ENCODE measurements at regions of chr10 and their contacts with region 1.

Region 1: DNA sequence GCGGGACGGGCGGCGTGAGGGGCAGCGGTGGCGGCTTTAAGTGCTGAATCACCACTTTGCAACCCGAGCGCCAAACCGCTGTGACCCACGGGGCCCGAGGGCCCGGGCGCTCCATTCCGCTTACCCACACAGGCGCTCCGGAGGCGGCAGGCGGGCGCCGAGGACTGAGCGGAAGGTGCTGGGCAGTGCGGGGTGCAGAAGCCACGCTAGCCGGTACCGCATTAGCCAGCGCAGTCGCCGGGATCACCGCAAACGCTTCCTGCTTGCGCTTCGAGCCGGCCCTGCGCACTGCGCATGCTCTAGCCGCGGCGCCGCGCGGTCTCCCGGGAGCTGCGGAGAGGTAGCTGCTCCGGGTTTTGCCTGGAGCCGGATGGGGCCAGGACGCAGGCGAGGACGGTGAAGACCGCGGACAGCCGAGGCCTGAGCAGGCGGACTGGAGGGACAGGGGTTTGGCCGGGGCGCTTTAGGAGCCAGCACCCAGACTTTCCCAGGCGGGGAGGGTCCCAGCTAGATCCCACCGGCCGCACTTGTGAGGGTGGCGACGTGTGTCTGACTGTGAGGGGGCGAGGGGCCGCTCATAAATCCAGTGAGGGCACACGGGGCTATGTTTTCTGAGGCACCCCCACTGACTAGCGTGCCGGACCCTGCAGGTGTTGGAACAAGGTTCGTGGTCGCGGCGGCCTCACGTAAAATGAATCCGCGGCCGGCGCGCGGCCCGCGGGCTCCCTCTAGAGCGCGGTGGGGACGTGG is at the start of gene IDE:
- DNase-seq: peak; percentile 90
- ATAC-seq: peak; percentile 85
- H3K4me3 Mint-ChIP-seq: peak within 1 kb of the TSS; percentile 77
- H3K27ac Mint-ChIP-seq: peak within 1 kb of the TSS; percentile 88
- H3K4me1 Mint-ChIP-seq: peaks cover 38% of the 10 kb centered on the region
- H3K27me3 Mint-ChIP-seq: no peaks in the 10 kb centered on the region
- total RNA-seq, gene IDE: 30.8 to 35.5 TPM

Region 2: GRCh38 chr10:92087750-92088395 is 486.1 kb before region 1 on chr10:
- CTCF ChIA-PET with region 1: interaction called, 4 read pairs
- POLR2A ChIA-PET with region 1: no interaction called
- intact Hi-C with region 1: loop called (anchors 5 to 10 kb)
- DNase-seq: peak; percentile 73
- ATAC-seq: peak; percentile 99
- H3K4me3 Mint-ChIP-seq: no peak overlapping the region
- H3K27ac Mint-ChIP-seq: no peak overlapping the region
- H3K4me1 Mint-ChIP-seq: peaks cover 5% of the 10 kb centered on the region
- H3K27me3 Mint-ChIP-seq: no peaks in the 10 kb centered on the region

Region 3: DNA sequence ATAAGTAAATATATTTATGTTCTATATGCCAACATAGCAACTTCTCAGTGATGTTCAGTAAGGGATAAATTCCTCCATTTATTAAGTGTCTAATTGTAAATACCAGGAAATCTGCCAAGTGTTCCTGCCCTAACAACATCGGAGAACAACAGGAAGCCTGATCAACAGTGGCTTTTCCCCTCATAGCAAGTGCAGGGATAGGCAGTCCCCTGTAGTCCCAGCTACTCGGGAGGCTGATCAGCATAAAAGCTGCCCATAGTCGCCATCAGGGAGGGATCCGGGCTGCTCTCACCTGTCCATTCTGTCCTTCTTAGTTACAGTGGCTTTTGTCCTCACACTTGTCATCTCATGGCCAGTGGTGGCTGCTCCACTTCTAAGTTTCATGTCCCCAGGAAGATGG is 141.4 kb before region 1 on chr10:
- CTCF ChIA-PET with region 1: no interaction called
- POLR2A ChIA-PET with region 1: no interaction called
- intact Hi-C with region 1: no loop called
- DNase-seq: no peak
- ATAC-seq: no peak
- H3K4me3 Mint-ChIP-seq: no peak overlapping the region
- H3K27ac Mint-ChIP-seq: no peak overlapping the region
- H3K4me1 Mint-ChIP-seq: no peaks in the 10 kb centered on the region
- H3K27me3 Mint-ChIP-seq: no peaks in the 10 kb centered on the region

Region 4: DNA sequence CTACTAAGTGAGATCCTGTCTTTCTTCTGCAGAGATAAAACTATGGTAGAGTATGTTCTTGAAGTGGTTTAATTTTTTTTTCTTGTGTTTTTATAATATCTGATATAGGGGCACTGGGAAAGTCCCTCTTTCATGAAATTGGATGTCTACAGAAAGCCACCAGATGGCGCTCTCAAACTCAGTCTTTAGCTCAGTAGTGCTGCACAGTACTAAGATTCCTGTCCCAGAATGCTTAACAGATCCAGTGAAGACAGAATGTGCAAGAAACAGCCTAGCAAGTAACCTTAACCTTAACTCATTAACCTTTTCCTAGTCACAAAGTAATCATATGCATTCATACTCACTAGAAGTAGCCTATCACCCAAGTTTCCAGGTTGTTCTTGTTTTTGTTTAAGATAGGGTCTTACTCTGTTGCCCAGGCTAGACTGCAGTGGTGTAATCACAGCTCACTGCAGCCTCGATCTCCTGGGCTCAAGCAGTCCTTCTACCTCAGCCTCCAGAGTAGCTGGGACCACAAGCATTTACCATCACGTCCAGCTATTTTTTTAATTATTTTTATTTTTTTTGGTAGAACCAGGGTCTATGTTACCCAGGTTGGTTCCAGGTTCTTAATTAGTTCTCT is 56.8 kb before region 1 on chr10:
- CTCF ChIA-PET with region 1: interaction called, 33 read pairs
- POLR2A ChIA-PET with region 1: interaction called, 4 read pairs
- intact Hi-C with region 1: loop called (anchors 1 kb)
- DNase-seq: peak; percentile 77
- ATAC-seq: peak; percentile 92
- H3K4me3 Mint-ChIP-seq: no peak overlapping the region
- H3K27ac Mint-ChIP-seq: no peak overlapping the region
- H3K4me1 Mint-ChIP-seq: peaks cover 6% of the 10 kb centered on the region
- H3K27me3 Mint-ChIP-seq: no peaks in the 10 kb centered on the region

Region 5: DNA sequence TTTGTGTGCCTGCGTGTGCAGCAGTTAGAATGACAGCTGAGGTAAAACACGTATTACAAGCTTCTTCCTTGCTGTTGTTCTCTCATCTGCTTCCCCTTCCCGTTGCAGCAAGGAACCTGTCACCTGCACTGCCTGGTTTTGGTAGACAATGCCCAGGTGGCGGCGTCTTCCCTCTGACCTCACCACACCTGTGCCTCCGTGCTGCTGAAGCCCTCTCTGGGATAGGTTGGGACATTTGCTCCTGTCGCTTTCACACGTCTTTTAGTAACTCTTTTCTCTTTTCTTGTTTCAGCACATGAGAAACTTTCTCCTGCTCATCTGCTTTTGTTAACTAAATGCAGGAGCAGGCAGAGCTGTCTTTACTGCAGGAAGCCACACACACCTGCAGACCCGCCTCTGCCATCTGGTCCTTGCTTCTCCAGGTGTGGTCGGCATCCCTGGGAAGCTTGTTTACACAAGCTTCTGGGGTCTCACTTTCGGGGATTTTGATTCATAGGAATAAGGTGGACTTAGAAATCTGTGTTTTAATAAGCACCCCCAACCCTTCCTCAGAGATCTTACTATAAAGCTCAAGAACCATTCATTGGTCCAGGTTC is 213.7 kb after region 1 on chr10:
- CTCF ChIA-PET with region 1: no interaction called
- POLR2A ChIA-PET with region 1: no interaction called
- intact Hi-C with region 1: no loop called
- DNase-seq: no peak
- ATAC-seq: no peak
- H3K4me3 Mint-ChIP-seq: no peak overlapping the region
- H3K27ac Mint-ChIP-seq: no peak overlapping the region
- H3K4me1 Mint-ChIP-seq: no peaks in the 10 kb centered on the region
- H3K27me3 Mint-ChIP-seq: no peaks in the 10 kb centered on the region

Region 6: DNA sequence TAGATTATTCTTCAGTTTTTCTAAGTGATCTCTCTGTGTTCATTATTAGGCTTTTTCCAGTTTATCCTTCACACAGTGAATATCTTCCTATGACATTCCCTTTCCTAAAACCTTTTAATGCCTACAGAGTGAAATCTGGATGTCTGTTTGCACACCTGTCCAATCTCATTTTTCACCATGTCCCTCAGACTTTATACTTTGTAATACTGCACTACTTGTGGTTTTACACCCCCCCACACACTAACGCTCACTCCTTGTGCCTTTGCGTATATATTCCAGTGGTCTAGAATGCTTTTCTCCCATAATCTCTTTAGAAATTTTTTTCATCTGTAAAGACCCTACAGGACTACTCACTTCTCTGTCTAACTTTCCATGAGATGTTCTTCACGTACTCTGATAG is 372.5 kb after region 1 on chr10:
- CTCF ChIA-PET with region 1: no interaction called
- POLR2A ChIA-PET with region 1: interaction called, 11 read pairs
- intact Hi-C with region 1: no loop called
- DNase-seq: no peak
- ATAC-seq: no peak
- H3K4me3 Mint-ChIP-seq: no peak overlapping the region
- H3K27ac Mint-ChIP-seq: no peak overlapping the region
- H3K4me1 Mint-ChIP-seq: no peaks in the 10 kb centered on the region
- H3K27me3 Mint-ChIP-seq: no peaks in the 10 kb centered on the region

Measured in activated CD4-positive, alpha-beta T cell treated with anti-CD3 and anti-CD28 coated beads for 36 hours (primary cell).